Gastrocnemius medialis (tissue), 4 donors: ENCODE measurements at regions of chr22 and their contacts with region 1.

Region 1: DNA sequence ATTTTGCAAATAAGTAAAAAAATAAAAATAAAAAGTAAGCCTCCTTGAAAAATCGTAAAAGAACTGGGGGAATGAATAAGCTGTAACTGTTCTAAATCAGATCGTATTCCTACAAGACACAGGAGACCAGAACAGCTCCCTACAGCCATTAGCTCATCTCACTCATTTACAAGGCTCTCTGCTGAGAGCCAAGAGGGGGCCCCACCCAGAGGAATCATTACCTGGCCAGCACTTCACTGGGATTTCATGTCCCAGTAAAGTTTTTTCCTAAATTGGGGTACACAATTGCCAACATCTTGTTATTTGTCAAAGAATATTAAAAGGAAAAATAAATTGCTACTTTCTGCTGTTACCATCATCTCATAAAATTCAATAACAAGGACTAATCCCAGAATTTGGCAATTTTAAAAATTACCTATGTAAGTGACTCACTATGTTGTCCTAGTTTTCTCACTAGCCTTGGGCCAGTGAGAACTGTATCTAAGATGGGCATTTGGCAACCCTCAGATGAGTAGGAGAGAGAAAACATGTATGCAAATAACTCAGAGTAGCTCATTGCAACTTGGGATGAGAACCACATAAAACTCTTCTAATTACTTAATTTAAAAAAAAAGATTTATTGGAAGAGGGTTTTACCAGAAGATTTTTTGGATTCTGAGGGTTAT is 18.4 kb upstream of the SMTN start:
- DNase-seq: no peak
- ATAC-seq: no peak
- H3K4me3 ChIP-seq: no peak overlapping the region
- H3K27ac ChIP-seq: no peak overlapping the region
- H3K4me1 ChIP-seq: no peaks in the 10 kb centered on the region
- H3K27me3 ChIP-seq: no peaks in the 10 kb centered on the region
- CTCF ChIP-seq: no peak
- POLR2A ChIP-seq: no peak

Region 2: DNA sequence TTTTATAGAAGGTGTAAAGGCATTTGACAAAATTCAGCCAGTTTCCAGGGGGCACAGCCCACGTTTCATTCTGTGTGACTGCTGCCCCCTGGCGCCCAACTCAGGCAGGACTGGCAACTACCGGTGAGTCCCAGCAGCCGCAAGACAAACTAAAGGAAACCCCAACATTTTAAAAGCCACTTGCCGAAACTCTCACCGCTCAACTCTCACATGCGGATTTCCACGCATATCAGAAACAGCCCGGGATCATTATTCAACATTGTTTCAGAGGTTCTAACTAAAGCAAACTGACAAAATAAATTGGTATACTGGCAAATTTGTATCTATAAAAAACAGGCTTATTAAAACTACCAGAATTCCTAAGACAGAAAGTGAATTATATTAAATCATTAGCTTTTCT is 142.3 kb before region 1 on chr22:
- in situ Hi-C with region 1: no loop called
- intact Hi-C with region 1: no loop called
- DNase-seq: peak; percentile 32 to 49
- ATAC-seq: peak in 1 of 2 donors; percentile 54
- H3K4me3 ChIP-seq: peak overlapping the region in 1 of 4 donors; percentile 5
- H3K27ac ChIP-seq: no peak overlapping the region
- H3K4me1 ChIP-seq: peaks cover 0 to 13% of the 10 kb centered on the region in 2 donors
- H3K27me3 ChIP-seq: no peaks in the 10 kb centered on the region
- CTCF ChIP-seq: peak; percentile 65 to 92 (median 78)
- POLR2A ChIP-seq: no peak

Region 3: DNA sequence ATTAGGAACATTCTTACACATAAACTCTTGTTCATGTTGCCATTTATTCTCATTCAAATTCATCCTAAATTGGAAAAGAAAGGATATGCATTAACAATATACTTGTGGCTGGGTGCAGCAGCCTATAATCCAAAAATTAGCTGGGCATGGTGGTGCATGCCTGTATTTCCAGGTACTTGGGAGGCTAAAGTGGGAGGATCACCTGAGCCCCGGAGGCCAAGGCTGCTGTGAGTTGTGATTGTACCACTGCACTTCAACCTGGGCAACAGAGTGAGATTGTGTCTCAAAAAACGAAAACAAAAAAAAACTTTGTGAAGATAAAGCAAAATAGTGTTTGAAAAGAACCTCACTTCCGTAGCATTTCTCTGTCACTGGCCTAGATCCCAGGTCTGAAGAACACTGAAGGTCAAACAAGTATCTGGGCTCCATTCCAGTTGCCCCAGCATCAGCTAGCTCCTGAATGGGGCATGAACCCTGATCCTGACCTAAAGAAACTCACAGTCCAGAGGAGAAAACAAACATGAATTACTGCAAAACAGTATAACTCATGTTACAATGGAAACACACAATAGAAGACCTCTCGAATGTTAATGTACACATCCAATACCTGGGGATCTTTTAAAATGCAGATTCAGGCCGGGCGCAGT is 61.5 kb before region 1 on chr22:
- in situ Hi-C with region 1: loop called in 1 of 4 experiments (anchors 10 kb)
- intact Hi-C with region 1: no loop called
- DNase-seq: no peak
- ATAC-seq: no peak
- H3K4me3 ChIP-seq: no peak overlapping the region
- H3K27ac ChIP-seq: no peak overlapping the region
- H3K4me1 ChIP-seq: no peaks in the 10 kb centered on the region
- H3K27me3 ChIP-seq: no peaks in the 10 kb centered on the region
- CTCF ChIP-seq: no peak
- POLR2A ChIP-seq: no peak

Region 4: DNA sequence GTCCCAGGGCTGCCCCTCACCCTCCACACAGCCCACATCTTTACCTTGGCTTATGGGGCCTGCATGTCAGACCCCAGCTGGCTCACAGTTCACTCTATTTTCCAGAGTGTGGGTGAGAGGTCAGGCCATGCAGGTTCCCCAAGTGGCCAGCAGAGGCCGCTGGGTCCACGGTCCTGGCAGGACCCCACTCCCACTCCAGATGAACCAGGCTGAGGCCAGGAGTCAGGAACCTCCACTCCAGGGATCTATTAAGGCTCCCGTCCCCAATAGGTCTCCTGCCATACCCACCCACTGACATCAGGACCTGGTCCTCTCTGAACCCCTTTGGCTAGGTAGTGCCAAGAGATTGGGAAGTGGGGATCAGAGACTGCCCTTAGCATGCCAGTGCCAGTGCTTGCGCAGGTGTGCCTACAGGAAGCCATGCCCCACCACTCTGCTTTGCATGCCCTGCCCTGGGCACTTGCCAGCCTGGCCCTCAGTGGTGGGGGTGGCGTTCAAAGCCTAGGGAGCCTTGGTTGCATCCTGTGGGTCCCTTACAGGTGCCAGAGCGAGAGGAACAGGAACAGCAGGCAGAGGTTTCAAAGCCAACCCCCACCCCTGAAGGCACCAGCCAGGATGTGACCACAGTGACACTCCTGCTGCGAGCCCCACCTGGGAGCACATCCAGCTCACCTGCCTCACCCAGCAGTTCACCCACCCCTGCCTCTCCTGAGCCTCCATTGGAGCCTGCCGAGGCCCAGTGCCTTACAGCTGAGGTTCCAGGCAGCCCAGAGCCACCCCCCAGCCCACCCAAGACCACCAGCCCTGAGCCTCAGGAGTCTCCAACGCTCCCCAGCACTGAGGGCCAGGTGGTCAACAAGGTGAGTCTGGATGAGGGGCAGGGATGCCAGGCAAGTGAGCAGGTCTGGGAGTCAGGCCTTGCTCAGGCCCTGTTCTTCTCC is 26.7 kb after region 1 on chr22:
- in situ Hi-C with region 1: no loop called
- intact Hi-C with region 1: no loop called
- DNase-seq: peak; percentile 44 to 62
- ATAC-seq: peak; percentile 17 to 22
- H3K4me3 ChIP-seq: no peak overlapping the region
- H3K27ac ChIP-seq: peak overlapping the region; percentile 20 to 63 (median 54)
- H3K4me1 ChIP-seq: peaks cover 35 to 39% of the 10 kb centered on the region in 2 donors
- H3K27me3 ChIP-seq: no peaks in the 10 kb centered on the region
- CTCF ChIP-seq: peak; percentile 90 to 94 (median 93)
- POLR2A ChIP-seq: no peak